Mucosa of descending colon (tissue), 3 donors: ENCODE measurements at regions of chr1 and their contacts with region 1.

Region 1: DNA sequence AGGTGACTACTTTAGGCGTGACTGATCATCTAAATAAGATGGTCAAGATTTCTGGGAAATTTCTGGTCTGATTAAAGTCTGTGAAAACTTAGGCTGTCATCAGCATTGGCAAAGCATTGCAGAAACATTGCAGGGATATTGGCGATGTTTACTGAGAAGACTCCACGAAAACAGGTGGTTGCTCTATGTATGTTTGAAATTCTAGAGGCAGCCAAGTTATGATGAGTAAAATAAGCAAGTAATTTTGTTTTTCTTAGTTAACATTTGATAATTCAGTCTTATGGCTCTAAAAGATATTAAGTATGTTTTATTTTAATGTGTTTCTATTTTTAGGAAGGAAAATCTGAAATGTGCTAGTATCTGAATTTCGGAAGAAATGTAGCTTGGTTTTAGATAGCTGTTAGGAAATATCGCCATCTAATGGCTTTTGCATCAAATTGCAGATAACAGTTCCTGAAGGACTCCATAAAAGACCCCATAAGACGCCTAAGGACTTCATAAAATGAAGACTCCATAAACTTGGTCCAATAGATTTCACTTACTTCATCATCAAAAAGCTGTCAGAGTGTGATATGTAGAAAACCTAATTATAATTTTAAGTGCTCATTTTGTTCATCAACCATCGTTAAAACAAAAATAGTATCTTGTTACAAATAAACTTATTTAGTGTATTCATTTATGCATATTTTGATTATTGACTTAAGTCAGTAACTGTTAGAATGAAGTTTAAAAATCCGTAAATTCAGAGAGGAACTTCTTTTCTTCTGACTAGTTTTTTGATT is 344.6 kb downstream of the RYR2 start:
- DNase-seq: no peak
- ATAC-seq: no peak
- H3K4me3 ChIP-seq: no peak overlapping the region
- H3K4me1 ChIP-seq: no peaks in the 10 kb centered on the region
- CTCF ChIP-seq: no peak

Region 2: DNA sequence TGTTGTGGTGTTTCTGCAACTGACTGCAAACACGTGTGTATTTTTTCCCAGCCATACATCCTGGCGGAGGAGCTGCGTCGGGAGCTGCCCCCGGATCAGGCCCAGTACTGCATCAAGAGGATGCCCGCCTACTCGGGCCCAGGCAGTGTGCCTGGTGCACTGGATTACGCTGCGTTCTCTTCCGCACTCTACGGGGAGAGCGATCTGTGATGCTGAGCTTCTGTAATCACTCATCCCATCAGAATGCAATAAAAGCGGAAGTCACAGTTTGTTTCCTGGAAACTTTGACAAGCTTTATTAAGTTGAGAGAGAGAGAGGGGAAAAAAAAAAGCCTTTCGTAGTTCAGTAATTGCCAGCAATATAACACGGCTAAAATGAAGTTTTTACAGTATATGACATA is 624.1 kb before region 1 on chr1:
- intact Hi-C with region 1: loop called in 1 of 2 experiments (anchors 10 kb)
- DNase-seq: no peak
- ATAC-seq: no peak
- H3K4me3 ChIP-seq: no peak overlapping the region
- H3K4me1 ChIP-seq: no peaks in the 10 kb centered on the region
- CTCF ChIP-seq: no peak

Region 3: DNA sequence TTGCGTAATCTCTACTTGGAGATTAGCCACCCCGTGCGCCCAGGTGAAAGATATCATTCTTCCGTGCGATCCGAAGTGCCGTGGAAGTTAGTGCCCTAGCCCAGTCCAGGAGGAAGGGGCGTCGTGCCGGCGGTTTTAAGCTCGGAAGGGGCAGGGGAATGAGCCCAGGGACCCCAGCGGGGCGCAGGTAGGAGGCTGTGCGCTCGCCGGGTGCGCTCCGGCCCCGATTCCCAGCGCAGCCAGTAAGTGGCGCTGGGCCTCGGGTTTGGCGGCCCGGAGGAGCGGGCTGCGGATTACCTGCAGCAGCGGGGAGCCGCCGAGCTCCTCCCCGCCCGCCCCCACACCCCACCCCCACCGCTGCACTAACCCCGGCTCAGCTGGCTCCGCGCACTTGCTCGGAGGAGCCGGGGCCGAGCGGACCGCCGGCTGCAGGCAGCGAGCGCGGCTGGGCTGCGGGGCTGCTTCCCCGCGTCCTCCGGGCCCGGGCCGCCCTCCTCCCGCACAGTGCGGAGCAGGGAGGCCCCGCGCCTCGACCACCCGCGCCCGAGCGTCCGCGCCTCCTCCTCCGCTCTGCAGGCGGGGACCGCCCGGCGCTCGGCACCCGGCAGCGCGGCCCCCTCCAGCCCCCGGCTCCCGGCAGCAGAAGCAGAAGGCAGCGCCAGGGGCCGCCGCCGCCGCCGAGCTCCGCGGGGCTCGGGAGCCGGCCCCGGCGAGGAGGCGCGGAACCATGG is 344.6 kb before region 1 on chr1 and contains the start of gene RYR2:
- intact Hi-C with region 1: loop called in 1 of 2 experiments (anchors 10 kb)
- DNase-seq: no peak
- ATAC-seq: peak; percentile 44
- H3K4me3 ChIP-seq: no peak within 1 kb of the TSS
- H3K4me1 ChIP-seq: no peaks in the 10 kb centered on the region
- CTCF ChIP-seq: no peak
- total RNA-seq, gene RYR2: 0.35 to 5.9 (median 0.94) TPM

Region 4: GRCh38 chr1:237444120-237444790 is 57.7 kb after region 1 on chr1:
- intact Hi-C with region 1: no loop called
- DNase-seq: no peak
- ATAC-seq: no peak
- H3K4me3 ChIP-seq: no peak overlapping the region
- H3K4me1 ChIP-seq: no peaks in the 10 kb centered on the region
- CTCF ChIP-seq: no peak